ENCODE measurements at regions of chr15 and their contacts with region 1.

Region 1: GRCh38 chr15:61681038-61681418 is 379.2 kb downstream of the VPS13C start:
- DNase-seq: no peak

Region 2: DNA sequence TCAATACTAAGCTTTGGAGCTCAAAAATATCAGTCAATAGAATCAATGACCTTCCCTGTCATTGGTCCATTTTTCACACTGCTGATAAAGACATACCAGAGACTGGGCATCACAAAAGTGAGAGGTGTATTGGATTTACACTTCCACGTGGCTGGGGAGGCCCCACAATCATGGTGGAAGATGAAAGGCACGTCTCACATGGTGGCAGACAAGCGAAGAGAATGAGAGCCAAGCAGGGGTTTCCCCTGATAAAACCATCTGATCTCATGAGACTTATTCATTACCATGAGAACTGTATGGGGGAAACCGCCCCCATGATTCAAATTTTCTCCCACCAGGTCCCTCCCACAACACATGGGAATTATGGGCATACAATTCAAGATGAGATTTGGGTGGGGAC is 1365.2 kb before region 1 on chr15:
- intact Hi-C with region 1: loop called in 1 of 2 experiments (anchors 5 kb)
- DNase-seq: no peak

Region 3: DNA sequence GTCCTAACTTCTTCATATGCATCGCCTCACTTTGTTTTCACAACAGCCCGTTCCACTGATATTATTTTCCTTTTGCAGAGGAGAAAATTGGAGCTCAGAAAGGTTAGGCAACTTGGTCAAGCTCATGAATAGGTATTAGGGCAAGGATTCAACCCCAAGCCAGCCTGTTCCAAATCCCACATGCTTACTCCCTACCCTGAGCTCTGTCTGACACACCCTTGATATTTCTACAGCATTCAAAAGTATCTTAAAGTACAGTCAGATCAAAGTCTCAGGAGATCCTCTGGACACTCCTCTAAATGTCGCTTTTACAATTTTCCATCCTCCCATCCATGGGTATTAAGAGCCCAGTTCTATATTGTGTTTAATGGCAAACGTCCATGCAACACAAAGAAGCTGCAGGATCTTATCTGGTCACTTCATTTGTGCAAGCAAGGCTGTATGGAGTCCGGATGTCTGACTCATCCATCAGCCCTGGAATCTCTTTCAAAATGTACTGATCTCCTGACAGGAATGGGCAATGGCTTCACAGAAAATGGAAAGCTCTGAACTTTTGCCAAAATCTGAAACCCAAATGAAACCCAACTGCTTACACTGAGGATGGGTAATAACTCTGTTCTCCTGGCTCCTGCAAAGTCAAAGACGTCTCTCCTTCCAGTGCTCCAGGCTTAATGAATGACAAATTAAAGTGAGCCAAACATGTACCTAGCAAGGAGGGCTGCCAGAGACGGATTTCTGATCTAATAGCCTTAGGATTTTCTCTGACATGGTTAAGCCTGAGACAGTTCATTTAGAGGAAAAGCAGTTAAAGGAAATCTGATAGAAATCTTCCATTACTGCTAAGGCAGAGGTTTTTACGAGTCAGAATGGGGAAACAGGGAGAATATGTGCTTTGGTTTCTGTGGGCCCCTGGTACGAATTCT is 221.0 kb before region 1 on chr15:
- intact Hi-C with region 1: no loop called
- DNase-seq: no peak

Region 4: GRCh38 chr15:61736790-61737189 is 55.8 kb after region 1 on chr15:
- intact Hi-C with region 1: no loop called
- DNase-seq: no peak